ENCODE measurements at regions of chr4 and their contacts with region 1.

Region 1: DNA sequence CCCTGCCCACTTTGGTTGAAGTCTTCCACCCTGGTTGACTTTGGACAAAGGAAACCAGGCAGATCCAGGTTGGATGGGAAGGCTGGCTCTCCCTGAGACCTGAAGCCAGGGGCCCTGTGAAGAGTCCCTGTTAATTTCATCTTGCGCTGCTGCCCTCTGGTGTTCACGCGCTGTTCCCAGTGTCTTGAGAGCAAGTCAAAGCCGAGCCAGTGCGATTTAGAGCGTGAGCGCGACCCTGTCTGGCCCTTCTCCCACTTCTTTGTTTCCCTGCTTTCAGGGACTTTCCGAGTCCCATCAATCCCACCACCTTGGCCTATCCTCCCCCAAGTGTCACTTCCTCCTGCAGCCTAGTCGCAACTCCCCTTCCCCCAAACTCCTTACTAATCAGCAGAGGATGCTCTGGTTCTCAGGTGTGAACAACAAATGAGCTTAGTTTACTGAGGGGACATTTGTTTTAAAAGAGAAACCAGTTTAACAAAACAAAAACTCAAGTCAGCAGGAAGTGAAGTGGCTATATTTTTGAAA is 25.8 kb upstream of the CHRNA9 start:
- DNase-seq: peak; percentile 72 to 98 (median 88)

Region 2: DNA sequence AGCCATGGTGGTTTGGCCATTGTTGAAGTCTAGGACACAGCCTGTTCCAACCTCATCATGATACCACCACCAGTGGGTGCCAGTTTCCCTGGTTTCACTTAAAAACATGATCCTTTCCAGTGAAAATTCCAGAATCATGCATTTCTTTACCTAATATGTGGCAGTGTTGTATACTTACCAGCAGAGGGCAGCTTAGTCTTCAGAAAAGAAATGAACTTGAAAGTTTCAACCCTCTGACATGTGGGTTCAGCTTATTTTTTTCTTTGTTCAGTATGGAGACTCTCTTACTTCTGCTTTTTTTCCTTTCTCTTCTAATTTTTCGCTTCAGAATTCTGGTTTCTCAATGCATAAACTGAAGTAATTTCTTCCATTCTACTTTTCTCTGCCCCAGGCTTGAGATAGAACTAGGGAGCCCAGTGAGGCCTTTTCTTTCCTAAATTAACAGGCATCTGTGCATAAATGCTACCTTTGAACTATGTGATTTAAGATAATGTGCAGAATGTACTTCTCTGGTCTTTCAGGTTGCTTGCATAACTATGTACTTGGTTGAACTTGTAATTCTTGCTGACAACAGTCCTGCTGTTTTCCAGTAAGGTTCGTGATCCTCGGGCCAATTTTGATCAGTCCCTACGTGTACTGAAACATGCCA is 839.8 kb before region 1 on chr4:
- intact Hi-C with region 1: loop called (anchors 2 kb)
- DNase-seq: peak in 1 of 10 donors; percentile 16

Region 3: DNA sequence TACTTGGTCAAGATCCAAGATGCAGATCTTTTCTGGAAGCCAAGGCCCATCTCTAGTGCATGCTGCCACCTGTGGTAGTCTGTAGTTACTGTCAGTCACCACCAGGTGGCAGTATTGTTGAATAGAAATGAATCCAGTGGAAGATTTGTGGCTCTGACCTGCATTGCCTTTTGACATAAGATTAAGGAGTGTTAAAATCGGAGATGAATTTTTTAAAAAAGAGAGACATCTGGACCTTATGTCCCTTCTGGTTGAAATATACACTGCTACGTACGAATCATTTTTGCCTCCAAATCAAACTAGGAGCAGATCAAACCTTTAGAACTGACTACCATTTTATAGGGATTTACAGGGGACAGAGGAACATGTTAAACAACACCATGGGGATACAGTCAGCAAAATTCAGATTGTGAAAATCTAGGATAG is 159.3 kb before region 1 on chr4:
- intact Hi-C with region 1: loop called (anchors 2 kb)
- DNase-seq: peak in 3 of 10 donors; percentile 13 to 41 (median 23)

Region 4: DNA sequence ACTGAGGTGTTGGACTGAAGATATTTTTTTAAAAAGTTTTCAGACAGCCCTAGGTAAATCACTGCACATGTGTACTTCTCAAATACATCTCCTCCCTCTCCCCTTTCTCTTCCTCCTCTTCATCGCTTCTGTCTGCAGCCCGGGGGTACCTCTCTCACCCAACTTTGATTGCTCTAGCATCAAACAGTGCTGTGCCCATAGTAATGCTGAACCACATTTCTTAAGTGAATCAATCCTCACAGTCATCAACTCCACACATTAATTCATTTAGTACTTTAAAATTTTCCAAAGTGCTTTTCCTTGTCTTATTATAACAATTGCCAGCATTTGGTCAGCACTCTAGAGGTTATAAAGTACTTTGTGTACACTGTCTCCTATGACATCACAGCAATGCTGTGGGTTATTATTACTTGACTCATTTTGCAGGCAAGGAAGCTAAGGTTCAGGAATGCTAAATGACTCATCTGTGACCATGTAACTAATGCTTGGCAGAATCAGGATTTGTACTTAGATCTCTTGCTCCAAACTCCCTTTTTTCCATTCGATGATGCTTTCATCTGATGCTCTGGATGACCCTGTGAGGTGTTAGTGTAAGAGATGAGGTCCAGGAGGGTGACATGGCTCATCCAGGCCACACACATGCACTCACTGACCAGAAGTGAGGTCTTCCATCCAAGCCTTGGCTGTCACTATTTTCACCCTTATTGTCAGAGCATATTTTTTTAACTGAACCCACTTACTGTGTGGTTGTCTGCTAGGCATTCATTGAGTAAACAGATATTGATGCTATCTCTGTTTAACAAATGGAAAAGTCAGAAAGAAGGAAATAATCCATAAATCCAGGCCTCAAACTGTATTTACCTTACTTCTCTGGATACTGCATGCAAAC is 53.7 kb before region 1 on chr4:
- intact Hi-C with region 1: no loop called
- DNase-seq: no peak

Region 5: GRCh38 chr4:41806807-41807206 is 1497.5 kb after region 1 on chr4:
- intact Hi-C with region 1: no loop called
- DNase-seq: no peak

Measured in posterior cingulate gyrus (tissue), 11 donors.